Astrocyte of the cerebellum (primary cell): ENCODE measurements at regions of chr2 and their contacts with region 1.

Region 1: DNA sequence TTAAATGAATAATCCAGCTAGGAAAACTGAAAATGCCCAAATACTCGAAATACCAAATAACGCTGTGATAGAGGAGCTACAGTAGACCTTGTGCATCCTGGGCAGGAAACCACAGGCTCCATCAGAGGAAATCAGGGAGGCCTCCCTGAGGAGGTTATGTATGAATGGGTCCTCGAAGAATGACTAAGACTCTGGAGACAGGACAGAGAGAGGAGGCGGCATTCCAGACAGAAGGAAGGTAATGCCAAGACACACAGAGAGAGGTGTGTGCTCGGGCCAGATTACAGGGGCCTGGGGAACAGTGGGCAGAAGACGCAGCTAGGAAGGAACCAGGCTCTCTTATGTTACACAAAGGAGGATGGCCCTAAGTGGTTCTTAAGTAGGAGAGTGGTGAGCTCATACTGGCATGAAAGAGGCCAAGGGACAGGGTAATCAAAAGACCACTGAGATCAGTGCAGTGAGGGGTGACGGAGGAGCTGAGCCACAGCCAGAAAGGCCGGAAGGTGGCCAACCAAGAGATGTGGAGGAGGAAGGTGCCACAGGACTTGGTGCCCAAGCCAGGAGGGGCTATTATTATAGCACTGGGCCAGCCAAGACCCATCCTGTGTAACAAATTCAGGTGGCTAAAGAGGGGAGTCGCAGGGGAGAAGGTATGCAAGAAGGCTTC is 9.9 kb downstream of the ST3GAL5 start:
- DNase-seq: no peak
- H3K4me3 ChIP-seq: no peak overlapping the region
- CTCF ChIP-seq: no peak

Region 2: GRCh38 chr2:85814802-85815550 is 63.9 kb before region 1 on chr2:
- in situ Hi-C with region 1: loop called (anchors 5 kb)
- DNase-seq: no peak
- H3K4me3 ChIP-seq: no peak overlapping the region
- CTCF ChIP-seq: no peak

Region 3: DNA sequence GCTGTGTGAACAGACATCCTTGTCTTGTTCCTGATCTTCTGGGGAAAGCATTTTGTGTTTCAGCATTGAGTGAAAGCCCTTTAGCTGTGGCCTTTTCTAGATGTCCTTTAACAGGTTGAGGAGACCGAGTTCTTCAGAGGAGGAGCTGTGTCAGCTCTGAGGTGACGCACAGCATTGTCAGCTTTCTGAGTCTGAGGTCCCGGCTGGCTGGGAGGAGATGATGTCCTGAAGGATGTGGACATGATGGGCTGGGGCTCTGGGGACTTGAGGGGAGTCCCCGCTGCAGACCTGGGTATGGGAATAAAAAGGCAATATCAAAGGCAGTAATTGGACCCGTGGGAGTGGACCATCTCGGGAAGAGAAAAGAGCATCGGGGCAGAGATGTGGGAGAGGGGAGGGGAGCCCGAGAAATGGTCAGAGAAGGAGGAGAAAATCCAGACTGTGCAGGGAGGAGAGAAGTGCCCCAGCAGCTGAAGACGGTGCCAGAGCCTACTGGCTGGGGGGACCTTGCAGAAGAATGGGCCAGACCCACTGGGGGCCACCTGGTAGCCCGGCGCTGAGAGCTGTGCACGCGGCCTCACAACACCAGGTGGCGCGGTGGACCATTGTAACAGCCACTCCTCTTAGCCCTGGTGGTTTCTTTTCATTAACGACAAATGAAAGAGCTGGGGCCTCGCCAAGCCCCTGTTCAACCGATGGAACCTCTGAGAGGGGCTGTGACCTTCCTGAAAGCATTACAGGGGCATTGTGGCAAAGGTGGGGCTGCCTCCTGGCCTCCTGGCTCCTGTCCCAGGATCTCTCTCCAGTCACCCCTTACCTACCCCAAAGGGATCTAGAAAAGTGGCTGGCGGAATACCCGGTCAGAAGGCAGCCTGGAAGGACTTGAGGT is 51.6 kb before region 1 on chr2:
- in situ Hi-C with region 1: no loop called
- DNase-seq: peak; percentile 13
- H3K4me3 ChIP-seq: no peak overlapping the region
- CTCF ChIP-seq: peak; percentile 75

Region 4: DNA sequence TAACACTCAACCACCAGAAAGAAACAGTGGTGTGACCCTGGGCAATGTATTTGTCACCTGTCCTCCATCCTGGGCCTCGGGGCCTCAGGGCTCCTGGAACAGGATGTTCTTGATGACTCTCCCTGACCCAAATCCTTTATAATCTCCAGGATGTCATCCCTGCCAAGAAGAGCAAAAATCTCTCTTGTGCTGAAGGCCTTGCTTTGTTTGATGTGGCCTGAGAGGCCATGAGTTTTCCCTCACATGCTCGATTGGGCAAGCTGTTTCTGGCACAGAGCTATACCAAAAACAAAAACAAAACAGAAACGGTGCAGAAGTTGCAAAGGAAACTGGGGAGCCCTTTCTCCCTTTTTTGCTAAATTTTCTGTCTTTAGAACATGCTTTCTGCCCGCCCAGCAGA is 45.7 kb after region 1 on chr2:
- in situ Hi-C with region 1: loop called (anchors 5 kb)
- DNase-seq: peak; percentile 53
- H3K4me3 ChIP-seq: no peak overlapping the region
- CTCF ChIP-seq: no peak

Region 5: DNA sequence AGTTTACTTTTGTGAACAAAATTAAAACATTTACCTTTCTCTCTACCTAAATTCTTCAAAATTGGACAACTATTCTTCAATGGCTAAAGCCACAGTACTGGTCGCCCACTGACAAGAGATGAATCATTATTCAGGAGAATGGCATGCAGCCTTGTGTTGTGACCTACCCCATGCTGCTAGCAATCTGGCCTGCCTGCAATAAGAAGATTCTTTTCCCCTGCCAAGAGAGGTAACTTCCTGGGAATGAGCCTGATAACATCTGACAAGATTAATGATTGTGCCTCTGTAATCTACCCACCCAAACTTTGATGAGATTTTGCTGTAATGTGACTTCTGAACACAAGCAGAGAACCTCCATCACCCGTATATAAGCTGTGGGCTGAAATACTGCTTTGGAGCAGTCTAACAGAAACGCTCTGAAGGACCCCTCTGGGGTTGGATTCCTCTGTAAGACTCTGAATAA is 56.9 kb after region 1 on chr2:
- in situ Hi-C with region 1: no loop called
- DNase-seq: peak; percentile 40
- H3K4me3 ChIP-seq: no peak overlapping the region
- CTCF ChIP-seq: no peak